ENCODE measurements at regions of chr2 and their contacts with region 1.

Region 1: GRCh38 chr2:28661589-28662001 is 90.0 kb upstream of the PPP1CB start:
- DNase-seq: peak; percentile 75
- H3K4me3 ChIP-seq: no peak overlapping the region
- H3K27ac ChIP-seq: peak overlapping the region; percentile 83 to 91 (median 88)
- H3K4me1 ChIP-seq: peaks cover 42 to 90% (median 71%) of the 10 kb centered on the region in 4 donors
- H3K27me3 ChIP-seq: no peaks in the 10 kb centered on the region
- CTCF ChIP-seq: no peak
- EP300 ChIP-seq: peak; percentile 89
- POLR2A ChIP-seq: peak; percentile 21

Region 2: GRCh38 chr2:28325567-28326468 is 335.8 kb before region 1 on chr2:
- in situ Hi-C with region 1: no loop called
- intact Hi-C with region 1: no loop called
- DNase-seq: no peak
- H3K4me3 ChIP-seq: no peak overlapping the region
- H3K27ac ChIP-seq: no peak overlapping the region
- H3K4me1 ChIP-seq: peaks cover 0 to 10% (median 0%) of the 10 kb centered on the region in 4 donors
- H3K27me3 ChIP-seq: no peaks in the 10 kb centered on the region
- CTCF ChIP-seq: no peak
- EP300 ChIP-seq: no peak
- POLR2A ChIP-seq: no peak

Region 3: DNA sequence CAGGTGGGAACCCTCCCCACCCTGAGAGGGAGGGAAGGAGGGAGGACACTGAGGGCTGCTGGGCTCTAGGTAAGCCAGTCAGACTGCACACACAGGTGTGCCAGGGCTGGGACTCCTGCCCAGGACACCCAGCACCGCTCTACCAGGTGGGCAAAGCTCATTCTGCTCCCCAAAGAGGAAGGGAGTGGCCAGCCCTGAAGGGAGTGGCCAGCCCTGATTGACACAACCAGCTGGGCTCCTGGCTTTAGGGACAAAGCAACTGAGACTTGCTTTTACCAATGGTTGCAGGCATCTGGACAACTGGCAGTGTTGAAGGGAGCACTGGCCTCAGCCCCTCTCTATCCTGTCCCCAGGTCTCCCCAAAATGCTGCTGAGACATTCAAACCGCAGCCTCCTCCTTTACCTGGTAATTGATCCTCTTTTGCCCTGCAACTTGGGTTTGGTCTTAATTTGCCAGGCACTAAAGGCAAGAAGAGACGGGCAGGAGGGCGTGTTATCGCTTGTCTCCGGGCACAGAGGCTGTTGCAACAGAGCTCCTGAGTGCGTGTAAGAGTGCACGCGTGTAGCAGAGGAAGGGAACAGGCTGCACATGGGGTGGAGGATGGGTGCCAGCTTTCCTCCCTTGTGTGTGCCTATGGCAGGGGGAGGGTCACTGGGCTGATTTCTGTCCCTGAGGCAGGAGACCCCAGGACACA is 283.5 kb before region 1 on chr2:
- in situ Hi-C with region 1: no loop called
- intact Hi-C with region 1: no loop called
- DNase-seq: peak; percentile 88
- H3K4me3 ChIP-seq: peak overlapping the region in 1 of 4 donors; percentile 7
- H3K27ac ChIP-seq: peak overlapping the region; percentile 88 to 90 (median 89)
- H3K4me1 ChIP-seq: peaks cover 9 to 74% (median 49%) of the 10 kb centered on the region in 4 donors
- H3K27me3 ChIP-seq: no peaks in the 10 kb centered on the region
- CTCF ChIP-seq: no peak
- EP300 ChIP-seq: peak; percentile 74
- POLR2A ChIP-seq: peak; percentile 82

Region 4: DNA sequence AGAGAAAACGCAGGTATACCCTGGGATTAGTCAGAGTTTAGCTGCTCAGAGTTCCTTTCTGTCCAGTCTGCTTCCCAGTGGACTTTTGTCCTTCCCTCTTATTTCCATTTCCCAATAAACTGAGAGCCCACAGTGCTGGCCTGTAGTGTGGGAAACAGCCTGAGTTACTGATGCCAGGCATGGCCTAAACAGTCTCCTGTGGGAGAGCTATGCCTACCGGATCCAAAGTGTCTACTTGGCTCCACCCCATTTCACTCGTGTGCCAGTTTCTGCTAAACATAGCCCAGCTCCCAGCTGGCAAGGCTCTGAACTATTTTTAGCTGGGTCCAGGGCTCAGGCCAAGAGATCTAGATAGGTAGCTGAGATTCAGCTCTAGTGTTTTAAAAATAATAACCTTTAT is 74.4 kb after region 1 on chr2:
- in situ Hi-C with region 1: no loop called
- intact Hi-C with region 1: no loop called
- DNase-seq: peak; percentile 69
- H3K4me3 ChIP-seq: no peak overlapping the region
- H3K27ac ChIP-seq: peak overlapping the region; percentile 17 to 68 (median 56)
- H3K4me1 ChIP-seq: peaks cover 0 to 15% (median 5%) of the 10 kb centered on the region in 4 donors
- H3K27me3 ChIP-seq: no peaks in the 10 kb centered on the region
- CTCF ChIP-seq: no peak
- EP300 ChIP-seq: no peak
- POLR2A ChIP-seq: no peak

Region 5: DNA sequence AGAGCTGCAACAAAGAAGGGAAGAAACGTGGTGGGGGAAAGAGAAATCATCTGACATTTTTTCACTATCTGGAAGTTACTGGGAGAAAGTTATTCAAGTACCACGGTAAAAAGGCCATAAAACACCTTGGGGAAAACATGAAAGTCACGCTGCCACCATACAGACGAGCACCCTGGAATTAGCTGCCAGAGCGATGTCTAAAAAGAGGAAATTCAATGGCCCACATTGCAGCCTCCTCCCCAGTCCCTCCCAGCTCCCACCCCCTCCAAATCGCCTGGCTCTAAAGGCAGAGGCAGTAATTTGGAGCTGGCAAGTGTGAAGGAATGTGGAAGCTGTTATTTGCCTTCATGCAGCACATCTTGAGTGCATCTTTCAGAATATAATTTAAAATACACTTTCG is 1067.8 kb after region 1 on chr2:
- in situ Hi-C with region 1: no loop called
- intact Hi-C with region 1: loop called (anchors 5 kb)
- DNase-seq: no peak
- H3K4me3 ChIP-seq: no peak overlapping the region
- H3K27ac ChIP-seq: no peak overlapping the region
- H3K4me1 ChIP-seq: no peaks in the 10 kb centered on the region
- H3K27me3 ChIP-seq: no peaks in the 10 kb centered on the region
- CTCF ChIP-seq: no peak
- EP300 ChIP-seq: no peak
- POLR2A ChIP-seq: no peak

Measured in transverse colon (tissue), 4 donors.